ENCODE measurements at regions of chr20 and their contacts with region 1.

Region 1: GRCh38 chr20:59933849-59934596 is 586 bp upstream of the SYCP2 start:
- DNase-seq: no peak
- H3K4me3 ChIP-seq: peak overlapping the region; percentile 57
- H3K27me3 ChIP-seq: no peaks in the 10 kb centered on the region
- CTCF ChIP-seq: peak; percentile 78

Region 2: GRCh38 chr20:59705651-59706399 is 228.2 kb before region 1 on chr20:
- CTCF ChIA-PET with region 1: no interaction called
- POLR2A ChIA-PET with region 1: no interaction called
- DNase-seq: no peak
- H3K4me3 ChIP-seq: no peak overlapping the region
- H3K27me3 ChIP-seq: no peaks in the 10 kb centered on the region
- CTCF ChIP-seq: no peak

Region 3: DNA sequence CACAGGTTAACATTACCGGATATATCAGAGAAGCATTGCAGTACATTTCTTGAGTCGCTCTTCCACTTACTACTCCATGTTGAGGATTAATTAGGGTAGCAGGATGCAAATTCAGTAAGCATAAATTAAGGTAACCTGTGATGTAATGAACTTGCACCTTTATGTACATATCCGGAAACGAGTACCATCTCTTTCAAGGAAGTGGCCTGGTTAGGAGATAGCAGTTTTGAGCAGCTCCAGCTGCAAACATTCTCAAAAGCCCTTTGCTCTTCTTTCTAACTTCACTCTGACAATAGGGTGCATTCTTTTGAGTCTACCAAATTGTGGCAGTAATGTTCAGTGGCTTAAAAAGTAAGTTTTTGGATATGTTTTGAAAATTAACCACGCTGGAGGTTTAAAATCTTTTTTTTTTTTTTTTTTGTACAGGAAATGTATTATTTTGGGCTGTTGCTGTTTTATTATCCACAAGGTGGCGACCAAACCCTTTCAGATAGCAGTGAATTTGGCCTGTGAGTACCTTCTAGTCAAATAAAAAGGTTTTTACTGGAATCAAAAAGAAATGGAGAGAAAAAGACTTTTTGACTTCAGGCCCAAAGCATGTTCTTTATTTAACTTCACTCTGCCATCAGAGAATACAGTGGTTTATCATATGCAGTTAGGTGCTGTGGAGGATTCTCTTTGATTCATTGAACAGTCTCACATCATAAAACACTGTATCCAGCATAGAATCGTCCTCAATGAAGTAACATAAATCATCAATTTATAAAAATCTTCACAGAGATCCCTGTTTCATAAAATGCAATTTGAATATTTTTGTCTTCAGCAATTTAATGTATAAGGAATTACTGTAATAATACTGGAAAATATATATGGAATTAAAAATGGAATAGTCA is 15.1 kb after region 1 on chr20:
- CTCF ChIA-PET with region 1: interaction called, 23 read pairs
- POLR2A ChIA-PET with region 1: no interaction called
- DNase-seq: no peak
- H3K4me3 ChIP-seq: no peak overlapping the region
- H3K27me3 ChIP-seq: no peaks in the 10 kb centered on the region
- CTCF ChIP-seq: peak; percentile 67

Region 4: GRCh38 chr20:59955132-59955796 is 21.2 kb after region 1 on chr20:
- CTCF ChIA-PET with region 1: interaction called, 11 read pairs
- POLR2A ChIA-PET with region 1: no interaction called
- DNase-seq: no peak
- H3K4me3 ChIP-seq: no peak overlapping the region
- H3K27me3 ChIP-seq: no peaks in the 10 kb centered on the region
- CTCF ChIP-seq: peak; percentile 38

Region 5: GRCh38 chr20:60007464-60007863 is 73.4 kb after region 1 on chr20:
- CTCF ChIA-PET with region 1: no interaction called
- POLR2A ChIA-PET with region 1: no interaction called
- DNase-seq: no peak
- H3K4me3 ChIP-seq: no peak overlapping the region
- H3K27me3 ChIP-seq: peaks cover 5% of the 10 kb centered on the region
- CTCF ChIP-seq: no peak